Dendritic cell treated with granulocyte-macrophage colony-stimulating factor and Interleukin-4, amounts not matched to agents 40 ng/mL and 50 ng/mL, for 4 days (primary cell): ENCODE measurements at regions of chr15 and their contacts with region 1.

Region 1: GRCh38 chr15:44728576-44729407 is 7.5 kb upstream of the TRIM69 start:
- H3K4me3 Mint-ChIP-seq: peak overlapping the region; percentile 99
- H3K27ac Mint-ChIP-seq: peak overlapping the region; percentile 98
- H3K4me1 Mint-ChIP-seq: peaks cover 59% of the 10 kb centered on the region
- H3K27me3 Mint-ChIP-seq: no peaks in the 10 kb centered on the region

Region 2: DNA sequence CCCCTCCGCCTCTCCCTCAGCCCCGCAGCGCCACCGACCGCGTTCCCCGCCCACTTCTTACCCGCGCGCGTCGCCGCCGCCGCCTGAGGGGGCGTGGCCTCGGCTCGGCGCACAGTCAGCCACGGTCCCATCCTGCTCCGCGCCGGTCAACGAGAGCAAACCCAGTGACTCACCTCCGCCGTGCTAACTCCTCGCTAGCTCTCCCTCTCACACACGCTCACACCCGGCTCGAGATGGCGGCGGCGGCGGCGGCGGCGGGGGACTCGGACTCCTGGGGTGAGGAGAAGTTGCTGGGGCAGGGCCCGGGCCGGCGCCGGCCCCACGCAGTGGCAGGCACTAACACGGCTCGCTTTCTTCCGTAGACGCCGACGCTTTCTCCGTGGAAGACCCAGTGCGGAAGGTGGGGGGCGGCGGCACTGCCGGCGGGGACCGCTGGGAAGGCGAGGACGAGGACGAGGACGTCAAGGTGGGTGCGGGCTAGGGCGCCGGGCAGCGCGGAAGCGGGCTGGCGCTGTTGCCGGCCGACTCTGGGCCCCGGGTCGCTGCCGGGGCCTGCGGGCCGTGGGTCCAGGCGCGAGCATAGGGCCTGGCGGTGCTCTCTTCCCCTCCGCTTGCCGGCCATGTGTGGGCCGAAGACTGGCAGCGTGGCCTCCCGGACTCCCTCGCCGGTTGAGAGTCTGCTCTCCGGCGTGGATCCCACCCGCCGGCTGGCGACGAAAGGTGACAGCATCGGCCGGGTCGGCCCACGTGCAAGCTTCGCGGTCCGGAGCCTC is 191.6 kb before region 1 on chr15 and contains the start of gene EIF3J:
- intact Hi-C with region 1: loop called (anchors 2 kb)
- H3K4me3 Mint-ChIP-seq: peak within 1 kb of the TSS; percentile 87
- H3K27ac Mint-ChIP-seq: peak within 1 kb of the TSS; percentile 97
- H3K4me1 Mint-ChIP-seq: peaks cover 48% of the 10 kb centered on the region
- H3K27me3 Mint-ChIP-seq: no peaks in the 10 kb centered on the region

Region 3: GRCh38 chr15:44711356-44712107 is 17.3 kb before region 1 on chr15 and contains the start of gene B2M:
- intact Hi-C with region 1: loop called (anchors 1 kb)
- H3K4me3 Mint-ChIP-seq: peak within 1 kb of the TSS; percentile 95
- H3K27ac Mint-ChIP-seq: peak within 1 kb of the TSS; percentile 99
- H3K4me1 Mint-ChIP-seq: peaks cover 38% of the 10 kb centered on the region
- H3K27me3 Mint-ChIP-seq: no peaks in the 10 kb centered on the region